H1 (cell line): ENCODE measurements at regions of chr11 and their contacts with region 1.

Region 1: GRCh38 chr11:118164885-118165284 is 11.6 kb downstream of the SCN2B start:
- DNase-seq: no peak
- H3K4me3 ChIP-seq: no peak overlapping the region
- H3K27ac ChIP-seq: no peak overlapping the region
- H3K4me1 ChIP-seq: peaks cover 0 to 7% (median 5%) of the 10 kb centered on the region in 4 experiments; a peak in 6 of 7 replicates
- H3K27me3 ChIP-seq: peaks cover 2 to 45% (median 16%) of the 10 kb centered on the region in 4 experiments
- CTCF ChIP-seq: no peak
- EP300 ChIP-seq: no peak
- POLR2A ChIP-seq: no peak
- RAD21 ChIP-seq: no peak

Region 2: GRCh38 chr11:118152552-118153471 is 12.1 kb before region 1 on chr11 and contains the start of gene SCN4B:
- CTCF ChIA-PET with region 1: interaction called, 245 read pairs
- POLR2A ChIA-PET with region 1: interaction called, 15 read pairs
- DNase-seq: peak in 1 of 2 experiments; percentile 83
- H3K4me3 ChIP-seq: peak within 1 kb of the TSS; percentile 68 to 96 (median 77)
- H3K27ac ChIP-seq: no peak within 1 kb of the TSS
- H3K4me1 ChIP-seq: peaks cover 4 to 69% (median 46%) of the 10 kb centered on the region in 4 experiments
- H3K27me3 ChIP-seq: peaks cover 34 to 77% (median 73%) of the 10 kb centered on the region in 4 experiments
- CTCF ChIP-seq: no peak
- EP300 ChIP-seq: no peak
- POLR2A ChIP-seq: no peak
- RAD21 ChIP-seq: peak in 1 of 2 experiments; percentile 15; a peak in 1 of 4 replicates
- total RNA-seq, gene SCN4B: 2.0 and 2.8 TPM in 2 replicates

Region 3: GRCh38 chr11:118193910-118194566 is 29.2 kb after region 1 on chr11:
- CTCF ChIA-PET with region 1: no interaction called
- POLR2A ChIA-PET with region 1: no interaction called
- DNase-seq: no peak
- H3K4me3 ChIP-seq: no peak overlapping the region
- H3K27ac ChIP-seq: no peak overlapping the region
- H3K4me1 ChIP-seq: peaks cover 2 to 14% (median 4%) of the 10 kb centered on the region in 4 experiments; a peak in 5 of 7 replicates
- H3K27me3 ChIP-seq: no peaks in the 10 kb centered on the region
- CTCF ChIP-seq: no peak
- EP300 ChIP-seq: no peak
- POLR2A ChIP-seq: no peak
- RAD21 ChIP-seq: no peak